ENCODE measurements at regions of chr19 and their contacts with region 1.

Region 1: DNA sequence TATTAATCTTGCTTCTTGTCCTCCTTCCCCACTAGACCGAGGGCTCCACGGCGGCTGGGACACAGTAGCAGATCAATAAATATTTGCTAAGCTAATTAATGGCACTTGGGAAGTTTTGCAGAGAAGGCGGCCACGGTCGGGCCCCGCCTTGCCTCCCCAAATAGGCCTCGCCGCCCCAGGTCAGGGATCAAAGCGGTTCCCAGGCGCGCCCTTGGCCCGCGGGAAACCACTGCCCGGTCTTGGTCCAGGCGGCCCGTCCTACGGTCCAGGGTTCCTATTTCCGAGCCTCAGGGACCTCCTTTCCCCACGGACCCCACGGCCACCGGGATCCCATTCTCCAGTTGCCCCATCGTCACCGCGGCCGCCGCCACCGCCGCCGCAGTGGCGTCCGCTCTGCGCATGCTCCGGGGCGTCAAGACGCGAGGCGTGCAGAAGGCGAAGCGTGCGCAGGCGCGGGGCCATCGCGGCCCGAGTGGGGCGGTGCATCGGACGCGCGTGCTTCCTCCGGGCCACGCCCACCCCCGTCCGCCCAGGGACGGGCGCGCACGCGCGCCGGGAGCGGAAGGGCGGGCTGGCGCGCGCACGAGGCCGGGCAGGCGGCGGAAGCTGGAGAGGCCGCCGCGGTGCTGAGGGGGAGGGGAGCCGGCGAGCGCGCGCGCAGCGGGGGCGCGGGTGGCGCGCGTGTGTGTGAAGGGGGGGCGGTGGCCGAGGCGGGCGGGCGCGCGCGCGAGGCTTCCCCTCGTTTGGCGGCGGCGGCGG is at the start of gene SMARCA4:
- DNase-seq: peak; percentile 97
- H3K4me3 Mint-ChIP-seq: peak within 1 kb of the TSS; percentile 91
- H3K27ac Mint-ChIP-seq: peak within 1 kb of the TSS; percentile 86
- H3K4me1 Mint-ChIP-seq: peaks cover 28% of the 10 kb centered on the region
- H3K27me3 Mint-ChIP-seq: no peaks in the 10 kb centered on the region
- total RNA-seq, gene SMARCA4: 149 and 158 TPM in 2 replicates

Region 2: DNA sequence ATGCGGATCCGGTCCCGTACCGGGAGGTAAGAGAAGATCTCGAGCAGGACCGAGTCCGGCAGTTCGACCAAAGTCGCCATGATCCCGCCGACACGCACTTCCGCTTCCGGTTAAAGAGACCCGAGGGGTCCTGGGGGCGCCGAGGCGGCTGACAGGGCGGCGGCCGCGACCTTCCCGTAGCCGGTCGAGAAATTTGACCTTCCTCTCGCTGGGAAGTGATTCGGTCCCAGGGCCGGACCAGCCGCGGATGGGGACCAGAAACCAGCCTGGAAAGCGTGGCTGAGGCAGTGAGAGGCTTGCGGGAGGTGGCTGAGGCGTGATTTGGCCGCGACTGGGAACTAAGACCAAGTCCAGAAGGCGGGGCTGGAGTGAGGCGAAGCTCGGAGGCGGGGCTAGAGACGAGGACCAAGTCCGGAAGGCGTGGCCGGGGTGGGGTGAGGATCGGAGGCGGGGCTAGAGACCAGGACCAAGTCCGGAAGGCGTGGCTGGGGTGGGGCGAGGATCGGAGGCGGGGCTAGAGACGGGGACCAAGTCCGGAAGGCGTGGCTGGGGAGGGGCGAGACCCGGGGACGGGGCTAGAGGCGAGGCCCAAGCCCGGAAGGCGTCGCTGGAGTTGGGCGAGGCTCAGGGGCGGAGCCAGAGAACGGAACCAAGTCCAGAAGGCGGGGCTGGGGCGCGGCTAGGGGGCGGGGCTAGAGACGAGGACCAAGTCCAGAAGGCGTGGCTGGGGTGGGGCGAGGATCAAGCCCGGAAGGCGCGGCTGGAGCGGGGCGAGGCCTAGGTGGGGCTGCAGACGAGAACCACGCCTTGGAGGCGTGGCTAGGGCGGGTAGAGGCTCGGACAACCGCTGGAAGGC is 1141.5 kb before region 1 on chr19 and contains the start of gene FBXL12:
- intact Hi-C with region 1: loop called (anchors 5 kb)
- DNase-seq: peak; percentile 100
- H3K4me3 Mint-ChIP-seq: peak within 1 kb of the TSS; percentile 90
- H3K27ac Mint-ChIP-seq: peak within 1 kb of the TSS; percentile 87
- H3K4me1 Mint-ChIP-seq: peaks cover 21% of the 10 kb centered on the region
- H3K27me3 Mint-ChIP-seq: no peaks in the 10 kb centered on the region
- total RNA-seq, gene FBXL12: 23.4 and 23.7 TPM in 2 replicates

Region 3: GRCh38 chr19:10884274-10884673 is 76.2 kb before region 1 on chr19:
- intact Hi-C with region 1: no loop called
- DNase-seq: no peak
- H3K4me3 Mint-ChIP-seq: no peak overlapping the region
- H3K27ac Mint-ChIP-seq: no peak overlapping the region
- H3K4me1 Mint-ChIP-seq: peaks cover 2% of the 10 kb centered on the region
- H3K27me3 Mint-ChIP-seq: no peaks in the 10 kb centered on the region

Region 4: GRCh38 chr19:10928525-10929401 is 31.7 kb before region 1 on chr19 and contains the starts of genes TIMM29 and YIPF2:
- intact Hi-C with region 1: loop called (anchors 1 kb)
- DNase-seq: peak; percentile 91
- H3K4me3 Mint-ChIP-seq: peak within 1 kb of the TSS; percentile 94
- H3K27ac Mint-ChIP-seq: peak within 1 kb of the TSS; percentile 80
- H3K4me1 Mint-ChIP-seq: peaks cover 13% of the 10 kb centered on the region
- H3K27me3 Mint-ChIP-seq: no peaks in the 10 kb centered on the region
- total RNA-seq, gene TIMM29: 18.8 and 19.0 TPM in 2 replicates
- total RNA-seq, gene YIPF2: 25.0 and 25.9 TPM in 2 replicates

Region 5: DNA sequence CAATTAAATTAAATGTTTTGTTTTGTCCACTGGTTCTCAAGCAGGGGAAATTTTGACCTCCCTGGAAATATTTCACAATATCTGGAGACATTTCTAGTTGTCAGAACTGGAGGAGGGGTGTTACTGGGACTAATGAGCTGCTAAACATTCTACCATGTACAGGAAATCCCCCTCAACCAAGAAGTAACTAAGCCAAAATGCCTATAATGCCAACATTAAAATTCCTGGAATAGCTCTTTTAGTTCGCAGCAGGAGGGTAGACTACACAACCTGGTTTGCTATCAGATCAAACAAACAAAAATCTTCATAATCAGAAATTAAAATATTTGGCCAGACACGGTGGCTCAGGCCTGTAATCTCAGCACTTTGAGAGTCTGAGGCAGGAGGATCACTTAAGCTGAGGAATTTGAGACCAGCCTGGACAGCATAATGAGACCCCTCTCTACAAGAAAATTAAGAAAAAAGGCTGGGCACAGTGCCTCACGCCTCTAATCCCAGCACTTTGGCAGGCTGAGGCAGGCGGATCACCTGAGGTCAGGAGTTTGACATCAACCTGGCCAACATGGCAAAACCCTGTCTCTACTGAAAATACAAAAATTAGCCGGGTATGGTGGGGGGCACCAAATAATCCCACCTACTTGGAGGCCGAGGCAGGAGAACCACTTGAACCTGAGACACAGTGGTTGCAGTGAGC is 13.4 kb before region 1 on chr19:
- intact Hi-C with region 1: loop called (anchors 1 kb)
- DNase-seq: no peak
- H3K4me3 Mint-ChIP-seq: no peak overlapping the region
- H3K27ac Mint-ChIP-seq: no peak overlapping the region
- H3K4me1 Mint-ChIP-seq: peaks cover 4% of the 10 kb centered on the region
- H3K27me3 Mint-ChIP-seq: no peaks in the 10 kb centered on the region

Region 6: GRCh38 chr19:11090054-11090900 is 129.8 kb after region 1 on chr19:
- intact Hi-C with region 1: loop called (anchors 2 kb)
- DNase-seq: peak; percentile 98
- H3K4me3 Mint-ChIP-seq: peak overlapping the region; percentile 97
- H3K27ac Mint-ChIP-seq: peak overlapping the region; percentile 99
- H3K4me1 Mint-ChIP-seq: peaks cover 40% of the 10 kb centered on the region
- H3K27me3 Mint-ChIP-seq: no peaks in the 10 kb centered on the region